Mammary epithelial cell (primary cell): ENCODE measurements at regions of chr9 and their contacts with region 1.

Region 1: GRCh38 chr9:2234371-2234893 is 219.3 kb downstream of the SMARCA2 start:
- DNase-seq: peak; percentile 60
- H3K4me3 ChIP-seq: no peak overlapping the region
- H3K27ac ChIP-seq: no peak overlapping the region
- H3K4me1 ChIP-seq: peaks cover 2% of the 10 kb centered on the region
- H3K27me3 ChIP-seq: no peaks in the 10 kb centered on the region
- CTCF ChIP-seq: no peak

Region 2: DNA sequence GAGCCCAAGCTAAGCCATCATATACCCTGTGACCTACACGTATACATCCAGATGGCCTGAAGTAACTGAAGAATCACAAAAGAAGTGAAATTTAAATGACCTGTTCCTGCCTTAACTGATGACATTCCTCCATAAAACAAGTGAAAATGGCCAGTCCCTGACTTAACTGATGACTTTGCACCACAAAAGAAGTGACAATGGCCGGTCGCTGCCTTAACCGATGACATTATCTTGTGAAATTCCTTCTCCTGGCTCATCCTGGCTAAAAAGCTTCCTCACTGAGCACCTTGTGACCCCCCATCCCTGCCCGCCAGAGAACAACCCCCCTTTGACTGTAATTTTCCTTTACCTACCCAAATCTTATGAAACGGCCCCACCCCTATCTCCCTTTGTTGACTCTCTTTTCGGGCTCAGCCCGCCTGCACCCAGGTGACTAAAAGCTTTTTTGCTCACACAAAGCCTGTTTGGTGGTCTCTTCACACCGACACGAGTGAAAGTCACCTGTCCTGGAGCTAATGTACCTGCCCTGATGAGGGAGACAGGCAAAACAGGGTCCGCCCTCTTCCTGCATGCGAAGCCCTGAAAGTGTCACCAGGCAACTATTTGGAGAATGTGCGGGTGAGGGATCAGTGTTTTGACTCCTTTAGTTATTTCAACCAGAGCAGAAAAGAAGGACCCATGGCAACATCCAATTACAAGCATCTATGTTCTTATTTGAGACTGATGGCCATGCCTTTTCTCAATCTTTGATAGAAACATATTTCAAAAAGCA is 46.8 kb after region 1 on chr9:
- CTCF ChIA-PET with region 1: no interaction called
- dilution Hi-C with region 1: no loop called
- in situ Hi-C with region 1: no loop called
- intact Hi-C with region 1: no loop called
- DNase-seq: peak; percentile 6
- H3K4me3 ChIP-seq: no peak overlapping the region
- H3K27ac ChIP-seq: no peak overlapping the region
- H3K4me1 ChIP-seq: peaks cover 6% of the 10 kb centered on the region
- H3K27me3 ChIP-seq: no peaks in the 10 kb centered on the region
- CTCF ChIP-seq: no peak

Region 3: GRCh38 chr9:2620919-2621679 is 386.7 kb after region 1 on chr9:
- CTCF ChIA-PET with region 1: no interaction called
- dilution Hi-C with region 1: no loop called
- in situ Hi-C with region 1: no loop called
- intact Hi-C with region 1: loop called (anchors 5 kb)
- DNase-seq: peak; percentile 76
- H3K4me3 ChIP-seq: peak overlapping the region; percentile 66 to 86 (median 80)
- H3K27ac ChIP-seq: no peak overlapping the region
- H3K4me1 ChIP-seq: peaks cover 18% of the 10 kb centered on the region
- H3K27me3 ChIP-seq: no peaks in the 10 kb centered on the region
- CTCF ChIP-seq: no peak

Region 4: DNA sequence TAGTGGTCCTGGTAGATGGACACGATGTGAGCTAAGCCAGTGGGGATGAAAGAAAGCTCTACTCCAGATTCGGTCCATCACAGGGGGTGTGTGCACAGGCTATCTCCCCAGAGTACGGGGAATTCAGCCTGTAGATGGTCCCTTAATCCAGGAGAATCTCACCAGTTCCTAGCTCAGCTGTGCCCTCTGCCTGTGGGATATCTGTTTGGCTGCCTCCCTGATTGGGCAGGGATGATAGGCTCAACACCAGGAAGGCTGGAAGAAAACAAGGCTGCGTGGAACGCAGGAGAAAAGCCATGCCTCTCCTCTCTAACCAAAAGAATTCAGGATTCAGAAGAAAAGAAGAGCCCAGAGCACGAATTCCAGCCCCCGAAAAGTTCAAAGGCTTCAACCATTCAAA is 428.1 kb after region 1 on chr9:
- CTCF ChIA-PET with region 1: no interaction called
- dilution Hi-C with region 1: no loop called
- in situ Hi-C with region 1: no loop called
- intact Hi-C with region 1: loop called (anchors 2 kb)
- DNase-seq: no peak
- H3K4me3 ChIP-seq: no peak overlapping the region
- H3K27ac ChIP-seq: no peak overlapping the region
- H3K4me1 ChIP-seq: no peaks in the 10 kb centered on the region
- H3K27me3 ChIP-seq: no peaks in the 10 kb centered on the region
- CTCF ChIP-seq: peak; percentile 2 to 25

Region 5: GRCh38 chr9:2809691-2810433 is 575.4 kb after region 1 on chr9:
- CTCF ChIA-PET with region 1: no interaction called
- dilution Hi-C with region 1: no loop called
- in situ Hi-C with region 1: no loop called
- intact Hi-C with region 1: loop called (anchors 10 kb)
- DNase-seq: no peak
- H3K4me3 ChIP-seq: no peak overlapping the region
- H3K27ac ChIP-seq: no peak overlapping the region
- H3K4me1 ChIP-seq: no peaks in the 10 kb centered on the region
- H3K27me3 ChIP-seq: no peaks in the 10 kb centered on the region
- CTCF ChIP-seq: no peak

Region 6: DNA sequence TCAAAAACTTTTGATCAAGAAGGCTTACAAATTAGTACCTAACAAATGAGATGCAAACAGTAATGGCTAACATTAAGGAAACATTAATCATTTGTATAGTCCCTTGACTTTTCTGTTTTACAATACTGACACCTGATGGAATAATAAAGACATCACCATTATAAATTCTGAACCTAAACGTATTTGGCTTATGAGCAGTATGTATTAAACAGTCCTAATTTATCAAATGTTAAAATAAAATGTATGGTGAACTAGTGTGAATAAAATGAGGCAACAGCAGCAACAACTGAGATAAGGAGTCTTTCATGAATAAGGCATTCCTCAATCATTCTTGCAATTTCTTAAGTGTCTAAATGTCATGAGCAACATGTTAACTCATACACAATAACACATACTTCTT is 603.5 kb after region 1 on chr9:
- CTCF ChIA-PET with region 1: no interaction called
- dilution Hi-C with region 1: no loop called
- in situ Hi-C with region 1: loop called in 1 of 2 experiments (anchors 25 kb)
- intact Hi-C with region 1: loop called (anchors 5 kb)
- DNase-seq: no peak
- H3K4me3 ChIP-seq: no peak overlapping the region
- H3K27ac ChIP-seq: no peak overlapping the region
- H3K4me1 ChIP-seq: peaks cover 18% of the 10 kb centered on the region
- H3K27me3 ChIP-seq: no peaks in the 10 kb centered on the region
- CTCF ChIP-seq: peak; percentile 15 to 42